Activated B cell treated with CpG ODN at 0.5 μM for 24 hours (primary cell): ENCODE measurements at regions of chr2 and their contacts with region 1.

Region 1: GRCh38 chr2:170815746-170816503 is 762 bp upstream of the GAD1 start:
- DNase-seq: peak; percentile 45
- ATAC-seq: peak; percentile 44
- H3K4me3 Mint-ChIP-seq: peak overlapping the region; percentile 70
- H3K27ac Mint-ChIP-seq: no peak overlapping the region
- H3K4me1 Mint-ChIP-seq: peaks cover 50% of the 10 kb centered on the region
- H3K27me3 Mint-ChIP-seq: peaks cover 64% of the 10 kb centered on the region
- CTCF ChIP-seq: no peak

Region 2: GRCh38 chr2:169452080-169452479 is 1363.8 kb before region 1 on chr2:
- CTCF ChIA-PET with region 1: no interaction called
- POLR2A ChIA-PET with region 1: no interaction called
- intact Hi-C with region 1: loop called (anchors 10 kb)
- DNase-seq: no peak
- ATAC-seq: no peak
- H3K4me3 Mint-ChIP-seq: no peak overlapping the region
- H3K27ac Mint-ChIP-seq: no peak overlapping the region
- H3K4me1 Mint-ChIP-seq: no peaks in the 10 kb centered on the region
- H3K27me3 Mint-ChIP-seq: peaks cover 3% of the 10 kb centered on the region
- CTCF ChIP-seq: no peak

Region 3: DNA sequence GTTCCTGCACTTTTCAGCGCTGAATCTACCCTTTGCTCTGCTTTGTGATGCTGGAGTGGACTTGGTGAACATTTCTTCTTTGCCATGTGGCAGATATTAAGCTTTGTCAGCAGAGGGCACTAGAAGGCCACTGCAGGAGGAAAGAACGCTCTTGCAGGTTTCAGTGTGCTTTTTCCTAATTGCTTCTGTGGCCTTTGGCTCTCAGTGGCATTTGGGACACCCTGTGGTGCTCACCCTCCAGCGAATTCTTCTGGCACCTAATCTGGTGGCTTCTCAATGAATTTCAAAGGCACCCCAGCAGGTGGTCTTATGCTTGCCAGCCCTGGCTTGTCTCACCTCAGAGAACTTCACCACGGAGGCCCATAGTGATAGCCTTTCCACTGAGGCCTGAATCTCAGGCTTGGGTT is 491.3 kb before region 1 on chr2:
- CTCF ChIA-PET with region 1: interaction called, 8 read pairs
- POLR2A ChIA-PET with region 1: no interaction called
- intact Hi-C with region 1: loop called (anchors 1 kb)
- DNase-seq: no peak
- ATAC-seq: no peak
- H3K4me3 Mint-ChIP-seq: no peak overlapping the region
- H3K27ac Mint-ChIP-seq: no peak overlapping the region
- H3K4me1 Mint-ChIP-seq: no peaks in the 10 kb centered on the region
- H3K27me3 Mint-ChIP-seq: no peaks in the 10 kb centered on the region
- CTCF ChIP-seq: no peak

Region 4: GRCh38 chr2:170386554-170386953 is 429.4 kb before region 1 on chr2:
- CTCF ChIA-PET with region 1: no interaction called
- POLR2A ChIA-PET with region 1: no interaction called
- intact Hi-C with region 1: no loop called
- DNase-seq: no peak
- ATAC-seq: no peak
- H3K4me3 Mint-ChIP-seq: no peak overlapping the region
- H3K27ac Mint-ChIP-seq: no peak overlapping the region
- H3K4me1 Mint-ChIP-seq: no peaks in the 10 kb centered on the region
- H3K27me3 Mint-ChIP-seq: peaks cover 33% of the 10 kb centered on the region
- CTCF ChIP-seq: no peak

Region 5: DNA sequence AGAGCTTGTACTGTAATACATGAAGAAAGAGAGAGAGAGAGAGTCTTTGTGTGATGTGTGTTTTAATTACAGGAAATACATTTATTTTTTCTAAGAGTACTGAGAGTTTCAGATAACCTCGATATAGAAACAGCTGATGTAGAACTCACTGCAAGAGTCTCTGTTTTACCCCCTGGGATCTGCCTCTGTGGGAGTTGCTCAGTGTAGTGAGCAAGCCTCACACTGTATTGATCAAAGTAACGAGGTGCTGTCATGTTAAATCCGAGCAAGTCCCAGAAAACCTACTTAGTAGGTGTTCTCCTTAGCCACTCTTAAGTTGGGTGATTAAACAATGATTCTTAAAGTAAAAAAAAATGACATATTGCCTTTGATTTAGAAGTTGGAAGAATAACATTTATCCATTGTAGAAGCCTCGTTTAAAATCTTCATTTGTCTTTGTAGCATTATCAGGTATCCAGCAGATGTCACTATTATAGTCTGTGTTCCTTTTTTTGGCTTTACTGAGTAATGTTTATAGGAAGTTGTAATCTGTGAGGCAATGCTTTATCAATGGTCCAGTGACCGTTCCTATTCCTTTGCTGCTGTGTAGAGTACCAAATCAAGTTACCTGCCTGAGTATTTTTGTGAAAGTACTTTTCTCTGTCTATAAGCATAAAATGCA is 419.0 kb before region 1 on chr2:
- CTCF ChIA-PET with region 1: interaction called, 3 read pairs
- POLR2A ChIA-PET with region 1: no interaction called
- intact Hi-C with region 1: loop called (anchors 1 kb)
- DNase-seq: no peak
- ATAC-seq: no peak
- H3K4me3 Mint-ChIP-seq: no peak overlapping the region
- H3K27ac Mint-ChIP-seq: no peak overlapping the region
- H3K4me1 Mint-ChIP-seq: no peaks in the 10 kb centered on the region
- H3K27me3 Mint-ChIP-seq: peaks cover 9% of the 10 kb centered on the region
- CTCF ChIP-seq: no peak

Region 6: GRCh38 chr2:170715062-170715931 is 100.6 kb before region 1 on chr2 and contains the start of gene SP5:
- CTCF ChIA-PET with region 1: no interaction called
- POLR2A ChIA-PET with region 1: no interaction called
- intact Hi-C with region 1: loop called (anchors 2 kb)
- DNase-seq: peak; percentile 15
- ATAC-seq: no peak
- H3K4me3 Mint-ChIP-seq: peak within 1 kb of the TSS; percentile 71
- H3K27ac Mint-ChIP-seq: no peak within 1 kb of the TSS
- H3K4me1 Mint-ChIP-seq: peaks cover 12% of the 10 kb centered on the region
- H3K27me3 Mint-ChIP-seq: peaks cover 58% of the 10 kb centered on the region
- CTCF ChIP-seq: no peak
- total RNA-seq, gene SP5: not detected in 2 replicates